K562 (cell line): ENCODE measurements at regions of chr1 and their contacts with region 1.

Region 1: GRCh38 chr1:203038891-203039608 is 12.8 kb downstream of the PPFIA4 start:
- DNase-seq: peak; percentile 81 to 83 (median 82)
- ATAC-seq: peak; percentile 95
- H3K4me3 ChIP-seq: no peak overlapping the region
- H3K27ac ChIP-seq: no peak overlapping the region
- H3K4me1 ChIP-seq: no peaks in the 10 kb centered on the region; a peak in 2 of 5 replicates
- H3K27me3 ChIP-seq: peaks cover 31 to 59% of the 10 kb centered on the region in 2 experiments; a peak in 4 of 5 replicates
- CTCF ChIP-seq: peak; percentile 91 to 99 (median 97)
- EP300 ChIP-seq: no peak
- POLR2A ChIP-seq: no peak
- RAD21 ChIP-seq: peak; percentile 72 to 90

Region 2: GRCh38 chr1:202979459-202979858 is 59.6 kb before region 1 on chr1:
- CTCF ChIA-PET with region 1: no interaction called
- POLR2A ChIA-PET with region 1: no interaction called
- in situ Hi-C with region 1: no loop called
- intact Hi-C with region 1: no loop called
- DNase-seq: peak in 1 of 4 experiments; percentile 8
- ATAC-seq: no peak
- H3K4me3 ChIP-seq: no peak overlapping the region
- H3K27ac ChIP-seq: no peak overlapping the region
- H3K4me1 ChIP-seq: peaks cover 0 to 4% of the 10 kb centered on the region in 2 experiments; a peak in 2 of 5 replicates
- H3K27me3 ChIP-seq: peaks cover 4 to 11% of the 10 kb centered on the region in 2 experiments; a peak in 2 of 5 replicates
- CTCF ChIP-seq: no peak
- EP300 ChIP-seq: no peak
- POLR2A ChIP-seq: no peak
- RAD21 ChIP-seq: no peak

Region 3: GRCh38 chr1:203026031-203026989 is 12.7 kb before region 1 on chr1 and contains the start of gene PPFIA4:
- CTCF ChIA-PET with region 1: no interaction called
- POLR2A ChIA-PET with region 1: interaction called, 13 read pairs
- in situ Hi-C with region 1: no loop called
- intact Hi-C with region 1: no loop called
- DNase-seq: peak; percentile 95 to 100 (median 100)
- ATAC-seq: peak; percentile 96
- H3K4me3 ChIP-seq: peak within 1 kb of the TSS; percentile 53
- H3K27ac ChIP-seq: peak within 1 kb of the TSS; percentile 72
- H3K4me1 ChIP-seq: peaks cover 11 to 27% of the 10 kb centered on the region in 2 experiments; a peak in 4 of 5 replicates
- H3K27me3 ChIP-seq: no peaks in the 10 kb centered on the region; a peak in 1 of 5 replicates
- CTCF ChIP-seq: peak in 2 of 3 experiments; percentile 16 to 25; a peak in 2 of 6 replicates
- EP300 ChIP-seq: no peak
- POLR2A ChIP-seq: peak; percentile 76
- RAD21 ChIP-seq: no peak
- polyA plus RNA-seq, gene PPFIA4: 0.07 to 0.08 TPM

Region 4: GRCh38 chr1:203051841-203052324 is 12.8 kb after region 1 on chr1:
- CTCF ChIA-PET with region 1: no interaction called
- POLR2A ChIA-PET with region 1: interaction called, 10 read pairs
- in situ Hi-C with region 1: no loop called
- intact Hi-C with region 1: no loop called
- DNase-seq: no peak
- ATAC-seq: no peak
- H3K4me3 ChIP-seq: no peak overlapping the region
- H3K27ac ChIP-seq: no peak overlapping the region
- H3K4me1 ChIP-seq: peaks cover 0 to 22% of the 10 kb centered on the region in 2 experiments; a peak in 2 of 5 replicates
- H3K27me3 ChIP-seq: peaks cover 78 to 96% of the 10 kb centered on the region in 2 experiments
- CTCF ChIP-seq: no peak
- EP300 ChIP-seq: no peak
- POLR2A ChIP-seq: no peak
- RAD21 ChIP-seq: no peak

Region 5: GRCh38 chr1:203117611-203118575 is 78.8 kb after region 1 on chr1:
- CTCF ChIA-PET with region 1: no interaction called
- POLR2A ChIA-PET with region 1: no interaction called
- in situ Hi-C with region 1: no loop called
- intact Hi-C with region 1: loop called (anchors 5 kb)
- DNase-seq: peak; percentile 78 to 96 (median 94)
- ATAC-seq: peak; percentile 100
- H3K4me3 ChIP-seq: no peak overlapping the region
- H3K27ac ChIP-seq: no peak overlapping the region
- H3K4me1 ChIP-seq: peaks cover 0 to 5% of the 10 kb centered on the region in 2 experiments; a peak in 1 of 5 replicates
- H3K27me3 ChIP-seq: peaks cover 12 to 58% of the 10 kb centered on the region in 2 experiments; a peak in 4 of 5 replicates
- CTCF ChIP-seq: peak; percentile 87 to 92 (median 89)
- EP300 ChIP-seq: no peak
- POLR2A ChIP-seq: no peak
- RAD21 ChIP-seq: peak; percentile 94 to 96

Region 6: GRCh38 chr1:203172128-203173010 is 133.3 kb after region 1 on chr1:
- CTCF ChIA-PET with region 1: interaction called, 12 read pairs
- POLR2A ChIA-PET with region 1: interaction called, 3 read pairs
- in situ Hi-C with region 1: no loop called
- intact Hi-C with region 1: loop called (anchors 1 kb)
- DNase-seq: peak; percentile 78 to 92 (median 88)
- ATAC-seq: peak; percentile 93
- H3K4me3 ChIP-seq: no peak overlapping the region
- H3K27ac ChIP-seq: no peak overlapping the region
- H3K4me1 ChIP-seq: peaks cover 0 to 11% of the 10 kb centered on the region in 2 experiments; a peak in 1 of 5 replicates
- H3K27me3 ChIP-seq: peaks cover 14 to 68% of the 10 kb centered on the region in 2 experiments; a peak in 4 of 5 replicates
- CTCF ChIP-seq: peak; percentile 92 to 97 (median 93)
- EP300 ChIP-seq: no peak
- POLR2A ChIP-seq: no peak
- RAD21 ChIP-seq: peak; percentile 78 to 86

Region 7: GRCh38 chr1:203216274-203217138 is 177.5 kb after region 1 on chr1:
- CTCF ChIA-PET with region 1: interaction called, 13 read pairs
- POLR2A ChIA-PET with region 1: interaction called, 4 read pairs
- in situ Hi-C with region 1: loop called (anchors 5 kb)
- intact Hi-C with region 1: loop called (anchors 1 kb)
- DNase-seq: peak; percentile 71 to 82 (median 75)
- ATAC-seq: peak; percentile 94
- H3K4me3 ChIP-seq: no peak overlapping the region
- H3K27ac ChIP-seq: no peak overlapping the region
- H3K4me1 ChIP-seq: no peaks in the 10 kb centered on the region
- H3K27me3 ChIP-seq: peaks cover 17 to 61% of the 10 kb centered on the region in 2 experiments
- CTCF ChIP-seq: peak; percentile 84 to 93 (median 86)
- EP300 ChIP-seq: no peak
- POLR2A ChIP-seq: no peak
- RAD21 ChIP-seq: peak; percentile 88 to 93

Region 8: DNA sequence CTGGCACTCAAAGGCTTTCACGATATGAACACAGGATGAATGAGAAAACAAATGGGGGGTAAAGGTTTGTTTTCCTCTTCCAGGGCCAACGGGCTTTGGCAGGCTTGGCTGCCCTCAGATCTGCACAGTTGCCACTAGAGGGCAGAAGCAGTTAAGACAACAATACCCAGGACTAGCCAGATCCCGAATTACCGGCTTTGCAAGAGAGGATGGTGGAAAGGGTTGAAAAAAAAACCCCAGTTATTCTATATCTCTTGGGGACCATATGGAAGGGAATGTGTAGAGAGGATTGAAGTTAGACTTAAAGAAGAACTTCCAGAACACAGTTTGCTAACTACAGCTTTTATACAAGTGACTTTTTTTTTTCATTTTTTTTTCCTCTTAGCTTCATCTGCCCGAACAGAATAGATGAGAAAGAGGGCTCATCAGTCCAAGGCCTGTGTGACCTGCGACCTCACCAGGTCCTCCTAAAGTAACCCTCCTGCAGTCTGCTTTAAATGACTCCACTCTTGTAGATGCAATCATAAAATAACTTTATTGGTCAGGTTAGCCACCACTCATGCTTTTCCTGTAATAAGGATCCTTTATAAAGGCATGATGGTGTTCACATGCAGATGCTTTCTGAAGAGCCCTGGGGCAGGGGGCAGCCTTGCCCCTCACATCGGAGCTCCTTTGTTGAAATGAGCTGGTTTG is 301.2 kb after region 1 on chr1:
- CTCF ChIA-PET with region 1: no interaction called
- POLR2A ChIA-PET with region 1: no interaction called
- in situ Hi-C with region 1: no loop called
- intact Hi-C with region 1: loop called (anchors 10 kb)
- DNase-seq: peak; percentile 84 to 88 (median 88)
- ATAC-seq: peak; percentile 87
- H3K4me3 ChIP-seq: no peak overlapping the region
- H3K27ac ChIP-seq: no peak overlapping the region
- H3K4me1 ChIP-seq: peaks cover 0 to 4% of the 10 kb centered on the region in 2 experiments; a peak in 3 of 5 replicates
- H3K27me3 ChIP-seq: peaks cover 26 to 44% of the 10 kb centered on the region in 2 experiments
- CTCF ChIP-seq: peak; percentile 93 to 97 (median 94)
- EP300 ChIP-seq: no peak
- POLR2A ChIP-seq: no peak
- RAD21 ChIP-seq: peak; percentile 93 to 94